CD14-positive monocyte (primary cell): ENCODE measurements at regions of chr11 and their contacts with region 1.

Region 1: GRCh38 chr11:5210376-5210885 is 9.9 kb upstream of the OR51V1 start:
- DNase-seq: no peak
- H3K4me3 ChIP-seq: no peak overlapping the region
- H3K4me3 Mint-ChIP-seq: no peak overlapping the region
- H3K27ac ChIP-seq: no peak overlapping the region
- H3K27ac Mint-ChIP-seq: no peak overlapping the region
- H3K4me1 ChIP-seq: no peaks in the 10 kb centered on the region
- H3K4me1 Mint-ChIP-seq: no peaks in the 10 kb centered on the region
- H3K27me3 ChIP-seq: no peaks in the 10 kb centered on the region
- H3K27me3 Mint-ChIP-seq: peaks cover 0 to 5% (median 0%) of the 10 kb centered on the region in 3 donors
- CTCF ChIP-seq: no peak

Region 2: GRCh38 chr11:5151713-5152153 is 58.7 kb before region 1 on chr11:
- intact Hi-C with region 1: loop called in 1 of 2 experiments (anchors 10 kb)
- DNase-seq: no peak
- H3K4me3 ChIP-seq: no peak overlapping the region
- H3K4me3 Mint-ChIP-seq: no peak overlapping the region
- H3K27ac ChIP-seq: no peak overlapping the region
- H3K27ac Mint-ChIP-seq: no peak overlapping the region
- H3K4me1 ChIP-seq: no peaks in the 10 kb centered on the region
- H3K4me1 Mint-ChIP-seq: no peaks in the 10 kb centered on the region
- H3K27me3 ChIP-seq: no peaks in the 10 kb centered on the region
- H3K27me3 Mint-ChIP-seq: peaks cover 0 to 4% (median 0%) of the 10 kb centered on the region in 3 donors
- CTCF ChIP-seq: no peak